ENCODE measurements at regions of chr1 and their contacts with region 1.

Region 1: DNA sequence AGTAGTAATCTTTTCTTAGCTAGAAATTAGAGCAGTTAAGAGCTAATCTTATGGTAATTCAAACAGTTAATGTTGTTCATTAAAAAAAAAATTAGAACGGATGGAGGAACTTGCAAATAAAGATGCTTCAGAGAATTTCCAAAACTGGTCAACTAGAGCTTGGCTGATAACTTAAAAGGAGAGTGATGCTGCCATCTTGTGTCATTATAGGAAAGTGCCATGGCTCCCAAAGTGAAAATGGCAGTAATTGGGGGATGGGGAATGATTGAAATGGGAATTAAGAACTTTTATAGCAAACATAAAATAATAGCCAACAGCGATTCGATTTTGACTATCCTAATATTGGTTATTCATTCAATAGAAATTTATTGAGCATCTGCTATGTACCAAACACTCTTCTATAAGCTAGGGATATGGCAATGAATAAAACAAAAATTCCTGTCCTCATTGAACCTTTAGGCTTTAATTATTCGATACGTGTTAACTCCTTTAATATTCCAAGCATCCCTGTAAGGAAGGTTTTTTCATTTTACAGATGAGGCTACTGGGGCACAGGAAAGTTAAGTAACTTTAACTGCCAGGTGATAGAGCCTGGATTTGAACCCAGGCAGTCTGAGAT is 5.7 kb upstream of the PLPP3 start:
- DNase-seq: peak in 1 of 2 donors; percentile 42
- ATAC-seq: peak; percentile 32 to 81 (median 68)
- H3K4me3 ChIP-seq: no peak overlapping the region
- H3K27ac ChIP-seq: no peak overlapping the region
- H3K4me1 ChIP-seq: peaks cover 0 to 17% (median 3%) of the 10 kb centered on the region in 9 donors
- H3K27me3 ChIP-seq: no peaks in the 10 kb centered on the region
- CTCF ChIP-seq: peak; percentile 78 to 94 (median 87)

Region 2: GRCh38 chr1:55140546-55140983 is 1444.5 kb before region 1 on chr1:
- intact Hi-C with region 1: loop called in 6 of 10 experiments (anchors 10 kb)
- DNase-seq: peak in 1 of 2 donors; percentile 88
- ATAC-seq: peak; percentile 82 to 97 (median 94)
- H3K4me3 ChIP-seq: no peak overlapping the region
- H3K27ac ChIP-seq: peak overlapping the region in 5 of 10 donors; percentile 5 to 50 (median 30)
- H3K4me1 ChIP-seq: peaks cover 0 to 21% (median 4%) of the 10 kb centered on the region in 9 donors
- H3K27me3 ChIP-seq: no peaks in the 10 kb centered on the region
- CTCF ChIP-seq: peak; percentile 58 to 94 (median 84)

Region 3: DNA sequence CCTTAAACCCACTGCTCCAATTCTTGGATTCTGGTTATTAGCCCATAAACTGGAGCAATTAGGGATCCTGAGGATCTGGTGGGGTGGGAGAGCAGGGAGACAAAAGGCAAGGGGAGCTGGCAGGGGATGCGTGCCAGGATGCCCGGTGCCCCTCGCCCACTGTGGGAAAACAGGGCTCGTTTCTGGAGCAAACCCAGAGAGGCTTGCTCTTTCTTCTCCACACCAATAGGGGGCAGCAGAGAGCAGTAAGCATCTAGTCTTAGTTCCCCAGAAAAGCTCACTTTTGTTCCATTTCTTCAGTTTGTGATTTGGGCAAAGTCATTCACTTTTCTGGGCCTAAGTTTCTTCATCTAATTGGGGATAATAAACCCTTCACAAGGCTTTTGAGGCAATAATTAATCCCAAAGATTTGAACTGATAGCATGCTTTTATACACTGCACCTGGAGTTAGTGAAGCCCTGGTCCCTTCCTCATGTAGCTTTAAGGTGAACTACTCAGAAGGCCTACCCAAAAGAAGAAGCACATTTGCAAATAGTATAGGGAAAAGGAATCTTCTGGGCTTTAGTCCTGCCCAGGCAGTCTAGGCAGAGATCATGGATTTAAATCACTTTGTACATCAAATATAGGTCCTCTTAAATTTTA is 1209.3 kb before region 1 on chr1:
- intact Hi-C with region 1: loop called (anchors 1 to 10 kb)
- DNase-seq: peak in 1 of 2 donors; percentile 62
- ATAC-seq: peak in 4 of 8 donors; percentile 10 to 63 (median 48)
- H3K4me3 ChIP-seq: no peak overlapping the region
- H3K27ac ChIP-seq: no peak overlapping the region
- H3K4me1 ChIP-seq: peaks cover 0 to 14% (median 0%) of the 10 kb centered on the region in 9 donors
- H3K27me3 ChIP-seq: no peaks in the 10 kb centered on the region
- CTCF ChIP-seq: peak; percentile 89 to 99 (median 92)

Region 4: GRCh38 chr1:55584526-55585401 is 1000.3 kb before region 1 on chr1:
- intact Hi-C with region 1: loop called in 1 of 10 experiments (anchors 10 kb)
- DNase-seq: no peak
- ATAC-seq: peak in 4 of 8 donors; percentile 21 to 30 (median 26)
- H3K4me3 ChIP-seq: no peak overlapping the region
- H3K27ac ChIP-seq: peak overlapping the region in 1 of 10 donors; percentile 1
- H3K4me1 ChIP-seq: peaks cover 0 to 26% (median 4%) of the 10 kb centered on the region in 9 donors
- H3K27me3 ChIP-seq: no peaks in the 10 kb centered on the region
- CTCF ChIP-seq: peak in 1 of 9 donors; percentile 13

Region 5: DNA sequence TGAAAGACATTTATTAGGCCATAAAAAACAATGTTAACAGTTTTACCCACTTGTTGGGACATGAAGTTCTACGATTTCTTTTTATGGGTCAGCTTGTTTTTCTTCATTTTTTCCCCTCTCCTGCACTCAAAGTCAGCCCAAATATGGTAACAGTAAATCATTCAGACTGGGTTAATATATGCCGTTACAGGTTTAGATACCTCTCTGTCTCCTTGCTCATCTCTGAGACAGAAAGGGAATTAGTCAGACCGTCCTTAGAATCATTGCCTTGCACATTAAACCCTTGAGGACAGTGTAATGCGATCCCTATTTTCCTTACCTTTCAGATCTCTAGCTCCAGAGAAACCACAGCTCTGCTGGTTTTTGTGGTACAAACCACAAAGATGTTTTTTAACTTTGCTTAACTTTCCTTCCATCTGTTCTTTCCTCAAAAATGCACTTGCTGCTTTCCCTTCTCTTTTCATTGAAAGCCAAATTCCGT is 619.0 kb before region 1 on chr1:
- intact Hi-C with region 1: loop called in 1 of 10 experiments (anchors 10 kb)
- DNase-seq: no peak
- ATAC-seq: no peak
- H3K4me3 ChIP-seq: no peak overlapping the region
- H3K27ac ChIP-seq: no peak overlapping the region
- H3K4me1 ChIP-seq: no peaks in the 10 kb centered on the region
- H3K27me3 ChIP-seq: no peaks in the 10 kb centered on the region
- CTCF ChIP-seq: no peak

Region 6: GRCh38 chr1:56409094-56409691 is 175.8 kb before region 1 on chr1:
- intact Hi-C with region 1: loop called in 1 of 10 experiments (anchors 10 kb)
- DNase-seq: peak in 1 of 2 donors; percentile 17
- ATAC-seq: peak in 2 of 8 donors; percentile 22 to 41
- H3K4me3 ChIP-seq: no peak overlapping the region
- H3K27ac ChIP-seq: no peak overlapping the region
- H3K4me1 ChIP-seq: peaks cover 0 to 53% (median 14%) of the 10 kb centered on the region in 9 donors
- H3K27me3 ChIP-seq: no peaks in the 10 kb centered on the region
- CTCF ChIP-seq: peak in 8 of 9 donors; percentile 26 to 54 (median 45)

Region 7: GRCh38 chr1:56566061-56566744 is 18.8 kb before region 1 on chr1:
- intact Hi-C with region 1: no loop called
- DNase-seq: no peak
- ATAC-seq: peak in 6 of 8 donors; percentile 25 to 50 (median 32)
- H3K4me3 ChIP-seq: no peak overlapping the region
- H3K27ac ChIP-seq: peak overlapping the region in 8 of 10 donors; percentile 1 to 74 (median 46)
- H3K4me1 ChIP-seq: peaks cover 23 to 100% (median 89%) of the 10 kb centered on the region in 9 donors
- H3K27me3 ChIP-seq: no peaks in the 10 kb centered on the region
- CTCF ChIP-seq: no peak